ENCODE measurements at regions of chr2 and their contacts with region 1.

Region 1: GRCh38 chr2:166375736-166376487 is at the start of gene SCN9A:
- DNase-seq: peak; percentile 86
- H3K4me3 Mint-ChIP-seq: peak within 1 kb of the TSS; percentile 84
- H3K27ac Mint-ChIP-seq: peak within 1 kb of the TSS; percentile 36
- H3K4me1 Mint-ChIP-seq: no peaks in the 10 kb centered on the region
- H3K27me3 Mint-ChIP-seq: no peaks in the 10 kb centered on the region
- CTCF ChIP-seq: no peak
- total RNA-seq, gene SCN9A: 6.1 and 8.5 TPM in 2 replicates

Region 2: GRCh38 chr2:166239548-166239947 is 136.4 kb before region 1 on chr2:
- CTCF ChIA-PET with region 1: no interaction called
- intact Hi-C with region 1: loop called (anchors 5 kb)
- DNase-seq: peak; percentile 61
- H3K4me3 Mint-ChIP-seq: no peak overlapping the region
- H3K27ac Mint-ChIP-seq: peak overlapping the region; percentile 73
- H3K4me1 Mint-ChIP-seq: peaks cover 53% of the 10 kb centered on the region
- H3K27me3 Mint-ChIP-seq: no peaks in the 10 kb centered on the region
- CTCF ChIP-seq: no peak